Gastrocnemius medialis (tissue), 4 donors: ENCODE measurements at regions of chr1 and their contacts with region 1.

Region 1: GRCh38 chr1:67314696-67315095 is 7.0 kb downstream of the IL12RB2 start:
- DNase-seq: no peak
- ATAC-seq: peak; percentile 28 to 46
- H3K4me3 ChIP-seq: no peak overlapping the region
- H3K27ac ChIP-seq: peak overlapping the region; percentile 49 to 81 (median 74)
- H3K4me1 ChIP-seq: peaks cover 12 to 29% of the 10 kb centered on the region in 2 donors
- H3K27me3 ChIP-seq: no peaks in the 10 kb centered on the region
- CTCF ChIP-seq: no peak
- POLR2A ChIP-seq: no peak

Region 2: DNA sequence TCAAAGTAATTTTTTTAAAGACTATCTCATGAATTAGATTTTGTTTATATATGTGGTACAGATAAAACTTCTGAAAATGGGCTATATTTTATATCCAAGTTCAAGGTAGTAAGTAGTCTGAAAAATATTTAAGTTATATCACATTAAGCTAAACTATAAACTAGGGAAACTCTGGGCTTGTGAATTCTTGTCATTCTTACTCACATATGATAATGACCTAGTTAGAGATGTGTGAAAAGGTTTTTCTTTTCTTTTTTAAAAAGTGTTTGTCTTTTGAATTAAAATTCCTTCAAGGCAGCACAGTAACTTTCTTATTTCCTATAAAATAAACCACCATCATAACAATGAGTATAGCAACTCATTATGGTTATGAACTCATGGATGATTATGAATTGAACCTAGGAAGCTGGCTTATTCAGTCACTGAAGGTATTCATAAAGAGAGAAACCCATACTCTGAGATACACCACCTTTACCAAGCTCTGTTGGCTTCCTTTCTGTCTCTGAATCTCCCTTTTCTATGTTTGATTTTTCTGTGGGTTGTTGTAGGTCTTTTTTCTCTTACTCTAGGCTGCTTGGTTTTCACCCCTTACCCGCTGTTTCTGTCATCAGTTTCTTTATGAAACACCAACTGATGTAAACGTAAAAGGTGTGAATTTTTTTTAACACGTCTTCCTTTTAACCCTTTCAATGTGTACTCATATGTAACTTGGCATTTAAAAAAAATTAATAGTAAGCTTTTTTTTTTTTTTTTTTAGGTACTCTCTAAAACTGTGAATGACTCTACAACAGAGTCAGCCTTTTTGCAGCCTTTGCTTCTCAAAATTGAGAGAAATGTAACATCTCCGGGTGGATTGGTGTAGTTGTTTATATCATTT is 18.2 kb after region 1 on chr1:
- in situ Hi-C with region 1: no loop called
- intact Hi-C with region 1: loop called (anchors 2 kb)
- DNase-seq: no peak
- ATAC-seq: no peak
- H3K4me3 ChIP-seq: no peak overlapping the region
- H3K27ac ChIP-seq: no peak overlapping the region
- H3K4me1 ChIP-seq: no peaks in the 10 kb centered on the region
- H3K27me3 ChIP-seq: no peaks in the 10 kb centered on the region
- CTCF ChIP-seq: no peak
- POLR2A ChIP-seq: no peak

Region 3: GRCh38 chr1:67339623-67340343 is 25.1 kb after region 1 on chr1:
- in situ Hi-C with region 1: no loop called
- intact Hi-C with region 1: loop called (anchors 2 kb)
- DNase-seq: peak; percentile 44 to 53
- ATAC-seq: peak; percentile 92 to 94
- H3K4me3 ChIP-seq: peak overlapping the region; percentile 4 to 27 (median 17)
- H3K27ac ChIP-seq: peak overlapping the region; percentile 88 to 91 (median 90)
- H3K4me1 ChIP-seq: peaks cover 14 to 20% of the 10 kb centered on the region in 2 donors
- H3K27me3 ChIP-seq: no peaks in the 10 kb centered on the region
- CTCF ChIP-seq: no peak
- POLR2A ChIP-seq: peak in 1 of 2 donors; percentile 46

Region 4: GRCh38 chr1:67897270-67897949 is 582.7 kb after region 1 on chr1:
- in situ Hi-C with region 1: no loop called
- intact Hi-C with region 1: no loop called
- DNase-seq: no peak
- ATAC-seq: no peak
- H3K4me3 ChIP-seq: no peak overlapping the region
- H3K27ac ChIP-seq: no peak overlapping the region
- H3K4me1 ChIP-seq: no peaks in the 10 kb centered on the region
- H3K27me3 ChIP-seq: no peaks in the 10 kb centered on the region
- CTCF ChIP-seq: no peak
- POLR2A ChIP-seq: no peak